H1 (cell line): ENCODE measurements at regions of chr4 and their contacts with region 1.

Region 1: DNA sequence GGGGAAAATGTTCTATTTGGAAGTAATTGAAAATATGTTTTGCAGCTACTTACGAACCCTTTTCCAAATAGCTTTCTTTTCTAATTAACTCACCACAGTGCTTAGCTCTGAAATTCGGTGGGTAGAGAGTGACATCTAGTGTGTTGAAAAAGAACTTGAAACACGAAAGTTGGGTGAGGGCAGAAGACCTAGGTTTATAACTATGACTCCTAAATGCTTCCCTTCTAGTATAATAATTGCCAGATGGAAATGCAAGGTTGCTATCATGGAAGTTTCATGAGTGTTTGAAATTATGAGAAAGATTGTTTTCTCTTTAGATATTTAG is 77.3 kb upstream of the NOCT start:
- DNase-seq: no peak
- H3K4me3 ChIP-seq: no peak overlapping the region
- H3K27ac ChIP-seq: no peak overlapping the region
- H3K4me1 ChIP-seq: peaks cover 3 to 8% (median 6%) of the 10 kb centered on the region in 4 experiments; a peak in 6 of 7 replicates
- H3K27me3 ChIP-seq: no peaks in the 10 kb centered on the region
- CTCF ChIP-seq: peak in 2 of 3 experiments; percentile 48 to 57; a peak in 2 of 4 replicates
- EP300 ChIP-seq: no peak
- POLR2A ChIP-seq: no peak
- RAD21 ChIP-seq: peak; percentile 81 to 83

Region 2: GRCh38 chr4:138838251-138838650 is 100.1 kb before region 1 on chr4:
- CTCF ChIA-PET with region 1: no interaction called
- POLR2A ChIA-PET with region 1: no interaction called
- DNase-seq: no peak
- H3K4me3 ChIP-seq: no peak overlapping the region
- H3K27ac ChIP-seq: no peak overlapping the region
- H3K4me1 ChIP-seq: no peaks in the 10 kb centered on the region
- H3K27me3 ChIP-seq: no peaks in the 10 kb centered on the region
- CTCF ChIP-seq: no peak
- EP300 ChIP-seq: no peak
- POLR2A ChIP-seq: no peak
- RAD21 ChIP-seq: no peak

Region 3: GRCh38 chr4:138919094-138919936 is 19.0 kb before region 1 on chr4:
- CTCF ChIA-PET with region 1: interaction called, 17 read pairs
- POLR2A ChIA-PET with region 1: no interaction called
- DNase-seq: peak in 1 of 2 experiments; percentile 86
- H3K4me3 ChIP-seq: no peak overlapping the region
- H3K27ac ChIP-seq: no peak overlapping the region
- H3K4me1 ChIP-seq: peaks cover 0 to 3% (median 0%) of the 10 kb centered on the region in 4 experiments; a peak in 1 of 7 replicates
- H3K27me3 ChIP-seq: no peaks in the 10 kb centered on the region
- CTCF ChIP-seq: peak; percentile 80 to 91 (median 81)
- EP300 ChIP-seq: no peak
- POLR2A ChIP-seq: no peak
- RAD21 ChIP-seq: peak; percentile 94 to 98

Region 4: GRCh38 chr4:138925495-138925894 is 12.8 kb before region 1 on chr4:
- CTCF ChIA-PET with region 1: interaction called, 17 read pairs
- POLR2A ChIA-PET with region 1: no interaction called
- DNase-seq: no peak
- H3K4me3 ChIP-seq: no peak overlapping the region
- H3K27ac ChIP-seq: no peak overlapping the region
- H3K4me1 ChIP-seq: no peaks in the 10 kb centered on the region
- H3K27me3 ChIP-seq: peaks cover 0 to 1% (median 0%) of the 10 kb centered on the region in 4 experiments; a peak in 1 of 7 replicates
- CTCF ChIP-seq: no peak
- EP300 ChIP-seq: no peak
- POLR2A ChIP-seq: no peak
- RAD21 ChIP-seq: no peak

Region 5: GRCh38 chr4:139036885-139037284 is 98.6 kb after region 1 on chr4:
- CTCF ChIA-PET with region 1: no interaction called
- POLR2A ChIA-PET with region 1: no interaction called
- DNase-seq: no peak
- H3K4me3 ChIP-seq: no peak overlapping the region
- H3K27ac ChIP-seq: no peak overlapping the region
- H3K4me1 ChIP-seq: no peaks in the 10 kb centered on the region
- H3K27me3 ChIP-seq: no peaks in the 10 kb centered on the region
- CTCF ChIP-seq: no peak
- EP300 ChIP-seq: no peak
- POLR2A ChIP-seq: no peak
- RAD21 ChIP-seq: no peak